Activated naive CD4-positive, alpha-beta T cell treated with anti-CD3 and anti-CD28 coated beads for 36 hours (primary cell): ENCODE measurements at regions of chr7 and their contacts with region 1.

Region 1: GRCh38 chr7:98149116-98149692 is 42.5 kb downstream of the LMTK2 start:
- DNase-seq: no peak
- H3K4me3 Mint-ChIP-seq: no peak overlapping the region
- H3K27ac Mint-ChIP-seq: no peak overlapping the region
- H3K4me1 Mint-ChIP-seq: no peaks in the 10 kb centered on the region
- H3K27me3 Mint-ChIP-seq: no peaks in the 10 kb centered on the region

Region 2: DNA sequence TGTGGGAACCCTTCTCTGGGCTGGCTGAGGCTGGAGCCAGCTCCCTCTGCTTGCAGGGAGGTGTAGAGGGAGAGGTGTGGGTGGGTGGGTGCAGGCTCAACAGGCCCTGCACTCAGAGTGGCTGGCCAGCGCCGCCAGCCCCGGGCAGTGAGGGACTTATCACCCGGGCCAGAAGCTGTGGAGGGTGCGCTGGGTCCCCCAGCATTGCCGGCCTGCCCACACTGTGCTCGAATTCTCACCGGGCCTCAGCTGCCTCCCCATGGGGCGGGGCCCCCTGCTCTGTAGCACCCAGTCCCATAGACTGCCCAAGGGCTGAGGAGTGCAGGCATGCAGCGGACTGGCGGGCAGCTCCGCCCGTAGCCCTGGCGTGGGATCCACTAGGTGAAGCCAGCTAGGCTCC is 608.0 kb before region 1 on chr7:
- CTCF ChIA-PET with region 1: no interaction called
- intact Hi-C with region 1: no loop called
- DNase-seq: no peak
- H3K4me3 Mint-ChIP-seq: no peak overlapping the region
- H3K27ac Mint-ChIP-seq: no peak overlapping the region
- H3K4me1 Mint-ChIP-seq: no peaks in the 10 kb centered on the region
- H3K27me3 Mint-ChIP-seq: no peaks in the 10 kb centered on the region

Region 3: DNA sequence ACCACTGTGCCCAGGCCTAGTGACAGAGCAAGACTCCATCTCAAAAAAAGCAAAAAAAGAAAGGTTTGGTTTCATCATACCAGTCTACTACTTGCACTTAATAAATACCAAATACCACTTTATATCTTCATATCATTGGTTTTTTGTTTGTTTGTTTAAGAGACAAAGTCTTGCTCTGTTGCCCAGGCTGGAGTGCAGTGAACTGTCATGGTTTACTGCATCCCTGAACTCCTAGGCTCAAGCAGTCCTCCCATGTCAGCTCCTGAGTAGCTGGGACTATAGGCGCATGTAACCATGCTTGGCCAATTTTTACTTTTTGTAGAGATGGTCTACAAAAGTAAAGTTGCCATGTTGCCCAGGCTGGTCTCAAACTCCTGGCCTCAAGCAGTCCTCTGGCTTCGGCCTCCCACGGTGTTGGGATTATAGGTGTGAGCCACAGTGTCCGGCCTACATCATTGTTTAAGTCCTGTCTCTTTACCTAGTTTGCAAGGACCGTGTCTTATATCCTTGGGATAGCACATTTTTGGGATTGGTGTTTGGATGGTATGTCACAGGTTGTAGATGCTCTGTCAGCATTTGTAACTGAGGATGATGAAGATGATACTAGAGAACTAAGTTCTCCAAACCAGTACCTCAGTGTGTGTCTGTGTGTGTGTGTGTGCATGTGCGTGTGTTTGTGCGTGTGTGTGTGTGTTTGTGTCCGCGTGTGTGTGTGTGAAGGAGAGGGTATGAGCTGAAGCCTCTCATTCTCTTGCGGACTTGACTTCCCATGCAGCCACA is 33.3 kb before region 1 on chr7:
- CTCF ChIA-PET with region 1: no interaction called
- intact Hi-C with region 1: loop called (anchors 2 kb)
- DNase-seq: no peak
- H3K4me3 Mint-ChIP-seq: no peak overlapping the region
- H3K27ac Mint-ChIP-seq: no peak overlapping the region
- H3K4me1 Mint-ChIP-seq: peaks cover 36% of the 10 kb centered on the region
- H3K27me3 Mint-ChIP-seq: no peaks in the 10 kb centered on the region